ENCODE measurements at regions of chr10 and their contacts with region 1.

Region 1: GRCh38 chr10:4849555-4850242 is 23.7 kb downstream of the AKR1E2 start:
- DNase-seq: peak; percentile 81 to 91
- H3K4me3 ChIP-seq: no peak overlapping the region
- H3K27ac ChIP-seq: peak overlapping the region; percentile 88
- H3K4me1 ChIP-seq: peaks cover 41% of the 10 kb centered on the region
- H3K27me3 ChIP-seq: no peaks in the 10 kb centered on the region
- CTCF ChIP-seq: peak; percentile 93

Region 2: DNA sequence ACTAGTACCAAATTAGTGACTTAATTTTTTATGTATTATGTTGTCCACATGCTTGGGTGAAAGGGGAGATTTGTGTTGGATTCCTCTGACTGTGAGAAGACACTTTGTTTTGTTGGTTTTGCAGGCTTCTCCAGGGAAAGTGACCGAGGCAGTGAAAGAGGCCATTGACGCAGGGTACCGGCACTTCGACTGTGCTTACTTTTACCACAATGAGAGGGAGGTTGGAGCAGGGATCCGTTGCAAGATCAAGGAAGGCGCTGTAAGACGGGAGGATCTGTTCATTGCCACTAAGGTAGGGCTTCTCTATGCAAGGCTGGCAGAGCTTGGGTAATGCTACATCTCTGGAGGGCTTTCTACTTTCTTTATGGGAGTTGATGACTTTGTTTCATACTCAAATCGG is 19.1 kb before region 1 on chr10:
- CTCF ChIA-PET with region 1: no interaction called
- POLR2A ChIA-PET with region 1: interaction called, 24 read pairs
- intact Hi-C with region 1: no loop called
- DNase-seq: no peak
- H3K4me3 ChIP-seq: no peak overlapping the region
- H3K27ac ChIP-seq: no peak overlapping the region
- H3K4me1 ChIP-seq: no peaks in the 10 kb centered on the region
- H3K27me3 ChIP-seq: no peaks in the 10 kb centered on the region
- CTCF ChIP-seq: no peak

Region 3: DNA sequence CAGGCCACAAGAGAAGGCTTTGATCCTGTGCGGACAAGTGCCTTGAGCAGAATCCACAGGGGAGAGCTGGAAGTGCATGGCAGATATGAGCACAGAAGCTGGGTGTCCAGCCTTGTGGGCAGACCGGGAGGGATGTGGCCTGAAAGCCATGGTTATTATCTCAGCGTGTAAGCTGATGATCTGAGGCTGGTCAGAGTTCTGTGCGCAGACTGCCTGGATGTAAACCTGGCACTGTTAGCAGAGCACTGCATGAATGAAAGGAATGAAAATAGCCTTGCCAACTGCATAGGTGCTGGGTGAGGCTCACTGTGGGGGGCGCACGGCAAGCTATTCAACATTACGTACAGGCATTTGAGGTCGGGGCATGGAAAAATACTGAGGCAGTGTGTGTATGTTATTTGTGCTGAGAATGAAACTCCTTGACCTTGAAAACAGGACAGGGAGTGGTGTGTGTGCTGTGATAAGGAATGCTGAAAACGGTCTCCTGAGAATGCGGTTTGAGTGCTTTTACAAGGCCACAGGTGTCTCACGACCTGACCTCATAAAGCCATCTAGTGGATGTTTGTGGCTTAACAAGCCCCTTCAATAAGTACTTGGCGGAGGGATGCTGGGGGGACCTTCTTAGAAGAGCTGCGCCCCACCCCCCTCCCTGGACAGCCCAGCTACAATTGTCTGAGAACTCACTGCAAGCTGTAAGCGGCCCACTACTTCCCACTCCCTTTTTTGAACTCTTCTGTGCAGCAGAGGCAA is 132.2 kb after region 1 on chr10:
- CTCF ChIA-PET with region 1: interaction called, 21 read pairs
- POLR2A ChIA-PET with region 1: interaction called, 35 read pairs
- intact Hi-C with region 1: loop called (anchors 1 kb)
- DNase-seq: peak; percentile 75 to 84
- H3K4me3 ChIP-seq: no peak overlapping the region
- H3K27ac ChIP-seq: peak overlapping the region; percentile 61
- H3K4me1 ChIP-seq: peaks cover 6% of the 10 kb centered on the region; the same call in 1 of the 2 replicates
- H3K27me3 ChIP-seq: no peaks in the 10 kb centered on the region
- CTCF ChIP-seq: peak; percentile 51

Region 4: DNA sequence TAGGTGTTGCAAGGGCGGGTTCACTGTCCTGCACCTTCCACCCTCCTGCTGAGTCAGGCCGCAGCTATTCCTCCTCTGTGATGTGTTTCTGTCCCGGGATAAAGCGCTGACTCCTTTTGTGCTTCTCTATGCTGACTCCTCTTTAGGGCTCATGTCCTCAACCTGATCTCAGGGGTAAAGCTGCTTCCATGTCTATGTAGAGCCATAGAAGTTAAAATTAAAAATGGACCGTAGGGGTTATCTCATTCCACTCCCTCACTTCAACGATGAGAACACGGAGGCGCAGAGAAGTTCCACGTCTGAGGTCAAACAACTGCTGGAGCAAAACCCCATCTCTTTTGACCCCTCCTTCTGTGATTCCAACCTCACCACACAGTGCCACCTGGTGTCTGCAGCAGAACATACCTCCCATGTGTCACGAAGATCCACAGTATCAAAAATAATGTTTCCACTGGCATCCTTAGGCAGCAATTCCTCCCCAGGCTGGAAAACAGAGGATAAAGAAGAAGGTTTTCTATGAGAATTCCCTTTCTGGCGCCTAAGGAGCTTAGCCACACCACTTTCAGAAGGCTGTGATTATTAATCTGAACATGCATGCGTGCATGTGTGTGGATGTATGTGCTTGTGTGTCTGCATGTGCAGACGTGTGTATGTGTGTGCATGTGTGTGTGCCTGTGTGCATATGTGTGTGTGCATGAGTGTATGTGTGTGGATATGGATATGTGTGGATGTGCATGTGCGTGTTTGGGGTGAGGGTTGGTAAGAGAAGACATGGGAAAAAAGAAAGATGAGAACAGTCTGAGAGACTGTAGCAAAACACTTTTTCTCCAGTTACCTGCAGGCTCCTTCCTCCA is 433.8 kb after region 1 on chr10:
- CTCF ChIA-PET with region 1: no interaction called
- POLR2A ChIA-PET with region 1: interaction called, 3 read pairs
- intact Hi-C with region 1: loop called (anchors 2 kb)
- DNase-seq: peak; percentile 56 to 76
- H3K4me3 ChIP-seq: peak overlapping the region; percentile 27; the same call in 1 of the 2 replicates
- H3K27ac ChIP-seq: peak overlapping the region; percentile 92
- H3K4me1 ChIP-seq: peaks cover 32% of the 10 kb centered on the region
- H3K27me3 ChIP-seq: no peaks in the 10 kb centered on the region
- CTCF ChIP-seq: peak; percentile 73

Region 5: GRCh38 chr10:5434017-5434753 is 584.5 kb after region 1 on chr10:
- CTCF ChIA-PET with region 1: interaction called, 9 read pairs
- POLR2A ChIA-PET with region 1: interaction called, 3 read pairs
- intact Hi-C with region 1: loop called (anchors 1 kb)
- DNase-seq: peak in 1 of 2 experiments; percentile 14
- H3K4me3 ChIP-seq: no peak overlapping the region
- H3K27ac ChIP-seq: peak overlapping the region; percentile 43
- H3K4me1 ChIP-seq: peaks cover 10% of the 10 kb centered on the region; the same call in 1 of the 2 replicates
- H3K27me3 ChIP-seq: no peaks in the 10 kb centered on the region
- CTCF ChIP-seq: peak; percentile 76

Region 6: DNA sequence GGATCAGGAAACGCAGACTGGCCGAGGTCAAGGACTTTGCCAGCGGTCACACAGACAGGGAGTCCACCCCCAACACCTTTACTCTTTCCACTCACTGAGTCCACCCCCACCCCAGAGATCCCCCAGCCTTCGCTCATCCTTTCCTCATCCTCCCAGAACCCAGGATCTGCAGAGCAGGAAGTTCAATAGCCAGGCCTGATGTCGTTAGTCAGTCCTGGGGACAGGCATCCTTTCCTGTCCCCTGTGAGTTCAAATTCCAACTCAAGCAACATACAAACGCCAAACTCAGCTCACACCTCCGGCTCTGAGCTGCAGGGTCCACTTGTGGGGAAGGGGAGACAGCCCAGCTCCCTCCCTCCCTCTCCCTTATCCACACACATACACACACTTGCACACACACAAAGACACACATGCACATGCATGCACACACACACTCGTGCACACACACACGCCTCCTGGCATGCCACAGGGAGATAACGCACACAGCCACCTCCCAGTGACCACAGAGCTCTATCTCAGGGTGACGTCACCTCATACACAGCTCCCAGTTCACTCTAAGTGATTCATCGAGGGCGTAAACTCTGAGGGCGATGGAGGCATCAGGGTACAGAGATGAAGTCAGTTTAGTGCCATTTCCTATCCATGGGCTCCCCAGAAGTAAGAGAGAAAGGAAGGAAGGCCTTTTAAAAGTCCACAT is 699.0 kb after region 1 on chr10:
- CTCF ChIA-PET with region 1: no interaction called
- POLR2A ChIA-PET with region 1: no interaction called
- intact Hi-C with region 1: loop called (anchors 5 kb)
- DNase-seq: peak; percentile 78 to 89
- H3K4me3 ChIP-seq: peak overlapping the region; percentile 26; the same call in 1 of the 2 replicates
- H3K27ac ChIP-seq: peak overlapping the region; percentile 100
- H3K4me1 ChIP-seq: peaks cover 98% of the 10 kb centered on the region
- H3K27me3 ChIP-seq: no peaks in the 10 kb centered on the region
- CTCF ChIP-seq: no peak

Measured in PC-9 (cell line).